Dendritic cell treated with granulocyte-macrophage colony-stimulating factor and Interleukin-4, amounts not matched to agents 40 ng/mL and 50 ng/mL, for 4 days (primary cell): ENCODE measurements at regions of chr2 and their contacts with region 1.

Region 1: GRCh38 chr2:151828143-151828889 is at the start of gene ARL5A:
- H3K4me3 Mint-ChIP-seq: peak within 1 kb of the TSS; percentile 93
- H3K27ac Mint-ChIP-seq: peak within 1 kb of the TSS; percentile 89
- H3K4me1 Mint-ChIP-seq: peaks cover 37% of the 10 kb centered on the region
- H3K27me3 Mint-ChIP-seq: no peaks in the 10 kb centered on the region

Region 2: DNA sequence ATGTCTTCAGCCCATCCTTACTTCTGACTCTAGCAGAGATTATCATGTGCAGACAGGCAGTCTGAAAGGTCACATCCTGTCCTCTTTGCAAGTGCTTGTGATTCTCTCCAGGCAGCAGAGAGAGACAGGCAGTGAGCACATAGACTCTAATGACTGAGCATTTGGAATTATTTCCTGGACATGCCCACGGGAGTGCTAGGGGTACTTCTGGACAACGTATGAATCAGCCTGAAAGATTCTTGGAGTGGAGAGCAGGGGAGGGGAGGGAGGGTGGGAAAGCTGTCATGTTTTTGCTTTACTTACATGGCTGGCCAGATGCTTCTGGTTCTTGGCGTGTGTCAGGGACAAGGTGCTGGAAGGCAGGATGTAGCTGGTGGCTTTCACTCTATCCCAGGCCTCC is 268.0 kb before region 1 on chr2:
- intact Hi-C with region 1: no loop called
- H3K4me3 Mint-ChIP-seq: no peak overlapping the region
- H3K27ac Mint-ChIP-seq: no peak overlapping the region
- H3K4me1 Mint-ChIP-seq: peaks cover 7% of the 10 kb centered on the region
- H3K27me3 Mint-ChIP-seq: no peaks in the 10 kb centered on the region

Region 3: DNA sequence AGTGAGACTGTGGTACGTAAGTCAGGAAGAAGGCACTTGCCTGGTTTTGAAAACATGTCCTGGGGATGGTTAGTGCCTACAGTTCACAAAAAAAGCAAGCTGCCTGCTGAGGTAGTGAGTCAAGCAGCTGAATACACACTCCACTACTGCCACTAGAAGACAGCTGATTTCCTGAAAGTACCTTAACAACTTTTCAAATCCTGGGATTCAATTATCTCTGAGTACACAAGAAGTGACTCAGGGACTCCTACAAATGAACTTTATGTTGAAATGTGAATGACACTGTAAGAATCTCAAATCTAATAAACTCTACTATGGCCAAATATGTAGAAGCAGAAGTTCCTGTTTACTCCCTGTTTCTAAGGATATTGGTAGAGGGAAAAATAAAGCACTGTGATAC is 57.9 kb after region 1 on chr2:
- intact Hi-C with region 1: loop called (anchors 5 kb)
- H3K4me3 Mint-ChIP-seq: no peak overlapping the region
- H3K27ac Mint-ChIP-seq: peak overlapping the region; percentile 51
- H3K4me1 Mint-ChIP-seq: peaks cover 13% of the 10 kb centered on the region
- H3K27me3 Mint-ChIP-seq: no peaks in the 10 kb centered on the region

Region 4: GRCh38 chr2:151946899-151947822 is 118.8 kb after region 1 on chr2:
- intact Hi-C with region 1: loop called (anchors 2 kb)
- H3K4me3 Mint-ChIP-seq: peak overlapping the region; percentile 71
- H3K27ac Mint-ChIP-seq: peak overlapping the region; percentile 83
- H3K4me1 Mint-ChIP-seq: peaks cover 50% of the 10 kb centered on the region
- H3K27me3 Mint-ChIP-seq: no peaks in the 10 kb centered on the region

Region 5: DNA sequence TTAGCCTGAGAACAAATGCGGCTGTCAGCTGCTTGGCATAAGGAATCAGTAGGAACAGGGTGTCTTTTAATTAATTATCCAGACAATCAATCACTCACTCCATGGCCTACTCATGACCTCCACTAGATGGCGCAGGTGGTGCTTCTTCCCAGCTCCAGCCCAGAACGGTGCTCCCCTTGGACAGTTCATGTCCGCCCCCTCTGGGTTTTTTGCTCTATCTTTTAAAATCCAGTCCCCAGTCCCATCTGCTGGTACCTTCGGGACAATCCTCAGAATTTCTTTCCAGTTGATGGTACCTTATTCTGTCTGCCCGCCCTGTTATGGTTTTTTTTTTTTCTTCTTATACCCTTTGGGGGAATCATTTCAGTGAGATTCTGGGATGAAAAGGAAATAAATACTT is 170.7 kb after region 1 on chr2:
- intact Hi-C with region 1: loop called (anchors 5 kb)
- H3K4me3 Mint-ChIP-seq: no peak overlapping the region
- H3K27ac Mint-ChIP-seq: no peak overlapping the region
- H3K4me1 Mint-ChIP-seq: peaks cover 2% of the 10 kb centered on the region
- H3K27me3 Mint-ChIP-seq: peaks cover 5% of the 10 kb centered on the region

Region 6: DNA sequence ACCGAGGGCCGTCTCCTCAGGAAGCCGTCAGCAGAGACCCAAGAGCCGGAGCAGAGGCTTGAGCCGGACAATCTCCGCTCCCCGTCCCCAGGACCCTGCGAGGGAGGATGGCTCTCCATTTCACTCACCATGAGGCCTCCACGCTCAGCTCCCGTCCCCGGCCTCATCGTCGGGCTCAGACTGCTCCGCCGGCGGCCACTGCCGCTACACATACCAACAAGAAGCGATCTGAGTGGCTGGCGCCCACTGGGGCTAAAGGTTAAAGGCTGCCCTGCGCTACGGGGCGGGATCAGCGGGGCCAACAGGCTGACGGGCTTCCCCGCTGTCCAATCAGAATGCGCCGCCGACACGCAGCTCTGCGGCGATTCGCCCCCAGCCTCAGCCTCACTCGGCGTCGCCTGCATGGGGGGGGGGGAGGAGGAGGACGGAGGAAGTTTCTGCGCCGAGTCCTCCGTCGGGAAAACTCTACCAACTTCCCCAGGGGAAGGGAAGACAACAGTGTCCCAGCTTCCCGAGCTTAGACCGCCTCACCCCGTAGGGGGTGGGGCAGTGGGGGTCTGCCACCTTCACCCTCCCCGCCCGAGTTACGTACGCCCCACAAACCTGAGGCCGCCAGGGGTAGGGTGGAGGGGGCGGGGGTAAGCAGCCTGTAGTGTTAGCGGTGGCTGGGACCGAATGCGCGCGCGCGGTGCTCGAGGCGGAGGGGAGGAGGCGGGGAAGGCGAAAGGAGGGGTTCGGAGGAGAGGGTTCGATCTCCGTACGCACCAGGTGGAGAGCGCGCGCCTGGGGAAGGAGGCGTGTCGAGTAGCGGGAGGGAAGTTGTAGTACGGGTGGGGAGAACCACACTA is 889.1 kb after region 1 on chr2 and contains the start of gene PRPF40A:
- intact Hi-C with region 1: loop called (anchors 10 kb)
- H3K4me3 Mint-ChIP-seq: peak within 1 kb of the TSS; percentile 92
- H3K27ac Mint-ChIP-seq: peak within 1 kb of the TSS; percentile 96
- H3K4me1 Mint-ChIP-seq: peaks cover 31% of the 10 kb centered on the region
- H3K27me3 Mint-ChIP-seq: no peaks in the 10 kb centered on the region